ENCODE measurements at regions of chr11 and their contacts with region 1.

Region 1: DNA sequence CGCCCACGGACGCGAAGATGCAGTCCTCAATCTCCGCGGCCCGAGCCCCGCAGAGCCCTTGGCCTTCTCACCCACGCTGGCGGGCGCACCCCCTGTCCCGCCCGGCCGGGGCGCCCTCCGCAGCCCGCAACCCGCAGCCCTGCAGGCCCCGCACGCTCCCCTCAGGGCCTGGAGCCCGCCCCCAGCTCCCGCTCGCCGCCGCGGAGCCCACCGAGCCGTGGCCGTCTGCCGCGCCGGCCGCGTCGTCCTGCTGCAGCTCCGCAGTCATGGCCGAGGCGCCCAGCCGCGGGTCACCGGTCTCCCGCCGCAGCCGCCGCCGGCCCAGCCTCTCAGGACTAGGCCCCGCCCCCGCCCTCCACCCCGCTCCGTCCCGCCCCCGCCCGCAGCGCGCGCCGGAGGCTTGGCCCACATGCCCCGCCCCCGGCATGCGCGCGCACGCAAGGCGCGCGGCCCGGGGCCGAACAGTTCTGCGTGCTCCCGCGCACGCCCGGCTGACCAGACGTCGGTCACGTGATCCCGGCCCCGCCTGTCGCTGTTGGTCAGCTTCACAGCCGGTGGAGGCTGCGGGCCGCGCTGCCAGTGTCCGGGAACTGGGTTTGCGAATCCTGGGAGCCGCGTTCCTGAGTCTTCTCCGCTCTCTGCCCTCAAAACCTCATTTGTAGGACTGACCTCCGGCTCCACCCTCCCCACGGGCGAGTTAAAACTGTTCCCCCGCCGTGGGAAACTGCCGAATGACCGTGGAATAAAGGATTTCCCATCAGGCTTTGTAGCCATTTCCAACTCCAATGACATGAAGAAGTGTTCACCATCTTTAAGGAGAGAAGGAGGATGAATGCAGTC is at the start of gene USP28:
- DNase-seq: peak; percentile 49 to 92 (median 73)
- ATAC-seq: peak; percentile 97
- H3K4me3 ChIP-seq: peak within 1 kb of the TSS; percentile 79
- H3K4me3 Mint-ChIP-seq: peak within 1 kb of the TSS; percentile 88 to 100 (median 98)
- H3K27ac ChIP-seq: peak within 1 kb of the TSS; percentile 78
- H3K27ac Mint-ChIP-seq: peak within 1 kb of the TSS; percentile 91 to 99 (median 98)
- H3K4me1 ChIP-seq: no peaks in the 10 kb centered on the region
- H3K4me1 Mint-ChIP-seq: peaks cover 34 to 59% (median 54%) of the 10 kb centered on the region in 7 donors
- H3K27me3 ChIP-seq: no peaks in the 10 kb centered on the region
- H3K27me3 Mint-ChIP-seq: no peaks in the 10 kb centered on the region
- total RNA-seq, gene USP28: 12.0 to 50.3 (median 19.0) TPM

Region 2: GRCh38 chr11:113681711-113682413 is 193.6 kb before region 1 on chr11:
- CTCF ChIA-PET with region 1: no interaction called
- POLR2A ChIA-PET with region 1: no interaction called
- intact Hi-C with region 1: no loop called
- DNase-seq: no peak
- ATAC-seq: no peak
- H3K4me3 ChIP-seq: no peak overlapping the region
- H3K4me3 Mint-ChIP-seq: no peak overlapping the region
- H3K27ac ChIP-seq: no peak overlapping the region
- H3K27ac Mint-ChIP-seq: no peak overlapping the region
- H3K4me1 ChIP-seq: no peaks in the 10 kb centered on the region
- H3K4me1 Mint-ChIP-seq: peaks cover 0 to 5% (median 0%) of the 10 kb centered on the region in 7 donors
- H3K27me3 ChIP-seq: no peaks in the 10 kb centered on the region
- H3K27me3 Mint-ChIP-seq: peaks cover 0 to 7% (median under 1%) of the 10 kb centered on the region in 5 donors

Region 3: DNA sequence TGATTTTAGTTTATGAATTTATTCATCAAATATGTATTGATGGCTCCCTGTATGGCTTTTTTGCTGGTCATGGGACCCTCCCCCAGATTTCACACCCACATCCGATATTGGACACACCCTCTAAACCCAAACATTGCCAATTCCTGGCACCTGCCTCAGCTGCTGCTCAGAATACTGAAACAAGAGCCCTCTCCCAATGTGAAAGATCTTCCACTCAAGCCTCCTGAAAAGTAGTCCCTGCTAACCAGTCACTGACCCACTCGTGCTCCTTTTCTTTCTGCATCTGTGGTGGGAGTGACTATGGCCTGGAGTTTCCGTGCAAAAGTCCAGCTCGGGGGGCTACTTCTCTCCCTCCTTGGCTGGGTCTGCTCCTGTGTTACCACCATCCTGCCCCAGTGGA is 96.0 kb before region 1 on chr11 and contains the start of gene CLDN25:
- CTCF ChIA-PET with region 1: no interaction called
- POLR2A ChIA-PET with region 1: no interaction called
- intact Hi-C with region 1: no loop called
- DNase-seq: no peak
- ATAC-seq: no peak
- H3K4me3 ChIP-seq: no peak within 1 kb of the TSS
- H3K4me3 Mint-ChIP-seq: no peak within 1 kb of the TSS
- H3K27ac ChIP-seq: no peak within 1 kb of the TSS
- H3K27ac Mint-ChIP-seq: peak within 1 kb of the TSS in 1 of 9 donors; percentile 65
- H3K4me1 ChIP-seq: no peaks in the 10 kb centered on the region
- H3K4me1 Mint-ChIP-seq: peaks cover 0 to 8% (median 1%) of the 10 kb centered on the region in 7 donors
- H3K27me3 ChIP-seq: no peaks in the 10 kb centered on the region
- H3K27me3 Mint-ChIP-seq: peaks cover 0 to 37% (median 17%) of the 10 kb centered on the region in 5 donors
- total RNA-seq, gene CLDN25: not detected

Region 4: GRCh38 chr11:113806406-113806805 is 69.0 kb before region 1 on chr11:
- CTCF ChIA-PET with region 1: no interaction called
- POLR2A ChIA-PET with region 1: no interaction called
- intact Hi-C with region 1: loop called in 1 of 2 experiments (anchors 1 kb)
- DNase-seq: no peak
- ATAC-seq: no peak
- H3K4me3 ChIP-seq: no peak overlapping the region
- H3K4me3 Mint-ChIP-seq: no peak overlapping the region
- H3K27ac ChIP-seq: no peak overlapping the region
- H3K27ac Mint-ChIP-seq: no peak overlapping the region
- H3K4me1 ChIP-seq: no peaks in the 10 kb centered on the region
- H3K4me1 Mint-ChIP-seq: peaks cover 0 to 2% (median 0%) of the 10 kb centered on the region in 7 donors
- H3K27me3 ChIP-seq: no peaks in the 10 kb centered on the region
- H3K27me3 Mint-ChIP-seq: no peaks in the 10 kb centered on the region

Region 5: GRCh38 chr11:113862435-113862834 is 13.0 kb before region 1 on chr11:
- CTCF ChIA-PET with region 1: no interaction called
- POLR2A ChIA-PET with region 1: interaction called, 3 read pairs
- intact Hi-C with region 1: loop called in 1 of 2 experiments (anchors 1 kb)
- DNase-seq: no peak
- ATAC-seq: no peak
- H3K4me3 ChIP-seq: no peak overlapping the region
- H3K4me3 Mint-ChIP-seq: peak overlapping the region in 2 of 10 donors; percentile 0 to 27
- H3K27ac ChIP-seq: no peak overlapping the region
- H3K27ac Mint-ChIP-seq: peak overlapping the region in 3 of 9 donors; percentile 2 to 74 (median 7)
- H3K4me1 ChIP-seq: peaks cover 0 to 25% of the 10 kb centered on the region in 2 donors
- H3K4me1 Mint-ChIP-seq: peaks cover 11 to 49% (median 22%) of the 10 kb centered on the region in 7 donors
- H3K27me3 ChIP-seq: no peaks in the 10 kb centered on the region
- H3K27me3 Mint-ChIP-seq: no peaks in the 10 kb centered on the region

Region 6: DNA sequence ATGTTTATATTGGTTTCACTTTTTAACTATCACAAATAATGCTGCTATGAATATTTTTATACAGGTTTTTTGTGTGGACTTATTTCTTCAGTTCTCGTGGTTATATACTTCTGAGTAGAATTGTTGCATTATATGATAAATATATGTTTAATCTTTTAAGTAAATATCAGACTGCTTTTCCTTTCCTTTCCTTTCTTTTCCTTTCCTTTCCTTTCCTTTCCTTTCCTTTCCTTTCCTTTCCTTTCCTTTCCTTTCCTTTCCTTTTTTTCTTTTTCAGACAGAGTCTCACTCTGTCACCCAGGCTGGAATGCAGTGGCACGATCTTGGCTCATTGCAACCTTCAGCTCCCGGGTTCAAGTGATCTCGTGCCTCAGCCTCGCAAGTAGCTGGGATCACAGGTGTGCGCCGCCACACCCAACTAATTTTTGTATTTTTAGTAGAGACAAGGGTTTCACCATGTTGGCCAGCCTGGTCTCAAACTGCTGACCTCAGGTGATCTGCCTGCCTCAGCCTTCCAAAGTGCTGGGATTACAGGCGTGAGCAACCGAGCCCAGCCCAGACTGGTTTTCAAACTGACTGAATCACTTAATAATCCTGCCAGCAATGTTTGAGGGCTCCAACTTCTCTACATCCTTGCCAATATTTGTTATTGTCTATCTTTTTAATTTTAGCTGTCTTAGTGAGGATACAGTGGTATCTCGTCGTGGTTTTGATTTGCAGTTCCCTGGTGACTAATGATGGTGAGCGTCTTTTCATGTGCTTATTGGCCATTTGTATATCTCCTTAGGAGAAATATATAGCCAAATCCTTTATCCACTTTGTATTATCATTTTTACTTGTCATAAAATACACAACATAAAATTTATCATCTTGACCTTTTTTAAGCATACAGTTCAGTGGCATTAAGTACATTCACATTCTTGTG is 51.1 kb after region 1 on chr11:
- CTCF ChIA-PET with region 1: no interaction called
- POLR2A ChIA-PET with region 1: no interaction called
- intact Hi-C with region 1: no loop called
- DNase-seq: no peak
- ATAC-seq: no peak
- H3K4me3 ChIP-seq: no peak overlapping the region
- H3K4me3 Mint-ChIP-seq: no peak overlapping the region
- H3K27ac ChIP-seq: no peak overlapping the region
- H3K27ac Mint-ChIP-seq: no peak overlapping the region
- H3K4me1 ChIP-seq: no peaks in the 10 kb centered on the region
- H3K4me1 Mint-ChIP-seq: peaks cover 0 to 2% (median 0%) of the 10 kb centered on the region in 7 donors
- H3K27me3 ChIP-seq: no peaks in the 10 kb centered on the region
- H3K27me3 Mint-ChIP-seq: peaks cover 5 to 29% (median 24%) of the 10 kb centered on the region in 5 donors

Region 7: GRCh38 chr11:114439229-114440120 is 564.0 kb after region 1 on chr11 and contains the start of gene REXO2:
- CTCF ChIA-PET with region 1: no interaction called
- POLR2A ChIA-PET with region 1: interaction called, 3 read pairs
- intact Hi-C with region 1: loop called in 1 of 2 experiments (anchors 1 kb)
- DNase-seq: peak; percentile 89 to 94 (median 92)
- ATAC-seq: peak; percentile 100
- H3K4me3 ChIP-seq: peak within 1 kb of the TSS; percentile 96
- H3K4me3 Mint-ChIP-seq: peak within 1 kb of the TSS; percentile 92 to 98 (median 96)
- H3K27ac ChIP-seq: peak within 1 kb of the TSS; percentile 79
- H3K27ac Mint-ChIP-seq: peak within 1 kb of the TSS; percentile 84 to 95 (median 93)
- H3K4me1 ChIP-seq: peaks cover 18 to 20% of the 10 kb centered on the region in 2 donors
- H3K4me1 Mint-ChIP-seq: peaks cover 22 to 56% (median 36%) of the 10 kb centered on the region in 7 donors
- H3K27me3 ChIP-seq: no peaks in the 10 kb centered on the region
- H3K27me3 Mint-ChIP-seq: peaks cover 0 to 4% (median 0%) of the 10 kb centered on the region in 5 donors
- total RNA-seq, gene REXO2: 33.8 to 105 (median 56.0) TPM